Right ventricle myocardium inferior (tissue), 1 donor: ENCODE measurements at regions of chr10 and their contacts with region 1.

Region 1: DNA sequence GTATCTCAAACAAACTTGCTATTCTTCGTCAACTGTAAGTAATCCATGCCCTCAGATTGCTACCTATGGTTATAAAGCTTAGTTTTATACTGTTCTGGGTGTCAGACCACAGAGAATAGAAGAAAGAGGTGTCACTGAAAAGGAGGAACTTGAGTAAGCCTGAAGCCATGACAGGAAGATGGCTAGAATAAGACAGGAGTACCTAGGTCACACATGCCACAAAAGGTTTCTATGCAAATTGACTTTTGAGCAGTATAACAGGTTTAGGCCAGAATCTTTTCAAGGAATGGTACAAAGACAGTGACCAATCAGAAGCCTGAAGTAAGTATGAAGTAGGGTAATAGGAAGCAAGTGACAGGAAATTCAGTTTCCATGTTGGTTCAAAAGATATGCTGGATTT is 23.5 kb downstream of the FBXW4 start:
- DNase-seq: no peak
- ATAC-seq: no peak

Region 2: DNA sequence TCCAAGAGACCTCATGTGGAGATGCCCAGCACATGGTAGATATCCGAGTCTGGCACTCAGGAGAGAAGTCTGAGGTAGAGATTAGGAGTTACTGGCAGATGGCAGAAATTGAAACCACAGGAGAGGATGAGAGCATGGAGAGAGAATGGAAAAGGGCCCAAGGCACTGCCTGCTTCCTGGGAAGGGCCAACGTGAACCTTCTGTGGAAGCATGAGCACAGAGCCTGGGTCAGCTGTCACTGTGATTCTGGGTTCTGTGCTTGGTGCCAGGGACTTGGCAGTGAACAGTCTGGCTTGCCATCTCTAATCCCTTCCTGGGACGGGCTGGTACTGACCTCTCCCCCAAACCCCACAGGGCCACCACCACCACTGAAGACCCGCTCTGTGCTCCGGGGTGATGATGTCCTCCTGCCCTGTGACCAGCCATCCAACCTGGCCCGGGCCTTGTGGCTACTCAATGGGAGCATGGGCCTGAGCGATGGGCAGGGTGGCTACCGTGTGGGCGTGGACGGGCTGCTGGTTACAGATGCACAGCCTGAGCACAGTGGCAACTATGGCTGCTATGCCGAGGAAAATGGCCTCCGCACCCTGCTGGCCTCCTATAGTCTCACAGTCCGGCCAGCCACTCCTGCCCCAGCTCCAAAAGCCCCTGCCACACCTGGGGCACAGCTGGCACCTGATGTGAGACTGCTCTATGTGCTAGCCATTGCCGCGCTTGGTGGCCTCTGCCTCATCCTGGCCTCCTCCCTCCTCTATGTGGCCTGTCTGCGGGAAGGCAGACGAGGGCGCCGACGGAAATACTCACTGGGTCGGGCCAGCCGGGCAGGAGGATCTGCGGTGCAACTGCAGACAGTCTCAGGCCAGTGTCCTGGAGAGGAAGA is 688.3 kb before region 1 on chr10:
- intact Hi-C with region 1: no loop called
- DNase-seq: no peak
- ATAC-seq: no peak

Region 3: DNA sequence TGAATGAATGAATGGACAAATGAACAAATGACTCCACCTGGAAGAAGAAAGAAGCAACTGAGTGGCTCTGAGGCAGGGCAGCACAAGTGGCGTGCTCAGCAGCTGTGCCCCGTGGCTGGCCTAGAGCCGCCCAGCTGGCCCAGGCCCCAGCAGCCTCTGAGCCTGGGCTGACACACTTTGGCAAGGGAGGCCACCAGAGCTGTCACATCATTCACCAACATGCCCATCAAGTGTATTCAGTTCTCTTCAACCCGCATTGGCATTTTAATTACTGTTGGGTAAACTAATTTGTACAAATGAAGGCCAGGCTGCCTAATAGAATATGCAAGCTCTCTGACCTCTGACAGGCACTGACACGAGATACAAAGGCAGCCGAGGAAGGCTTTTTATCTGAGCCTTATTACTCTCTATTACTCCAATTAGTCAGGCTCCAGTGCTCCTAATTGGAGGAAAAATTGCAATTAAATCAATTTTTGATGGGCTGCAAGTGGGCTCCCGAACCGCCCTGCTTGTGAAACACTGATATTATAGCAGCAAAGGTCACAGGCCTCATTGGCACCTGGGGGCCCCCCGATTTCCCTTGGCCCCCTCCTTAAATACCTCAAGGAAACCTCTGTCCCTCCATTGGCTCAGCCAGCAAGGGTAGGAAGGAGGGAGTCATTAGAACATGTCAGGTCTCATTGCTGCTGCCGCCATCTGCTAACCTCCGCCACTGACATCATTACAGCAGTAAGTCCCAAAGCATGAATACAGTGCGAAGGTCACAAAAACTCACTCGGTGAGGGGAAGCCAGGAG is 41.4 kb before region 1 on chr10:
- intact Hi-C with region 1: loop called (anchors 5 kb)
- DNase-seq: no peak
- ATAC-seq: peak; percentile 90

Region 4: DNA sequence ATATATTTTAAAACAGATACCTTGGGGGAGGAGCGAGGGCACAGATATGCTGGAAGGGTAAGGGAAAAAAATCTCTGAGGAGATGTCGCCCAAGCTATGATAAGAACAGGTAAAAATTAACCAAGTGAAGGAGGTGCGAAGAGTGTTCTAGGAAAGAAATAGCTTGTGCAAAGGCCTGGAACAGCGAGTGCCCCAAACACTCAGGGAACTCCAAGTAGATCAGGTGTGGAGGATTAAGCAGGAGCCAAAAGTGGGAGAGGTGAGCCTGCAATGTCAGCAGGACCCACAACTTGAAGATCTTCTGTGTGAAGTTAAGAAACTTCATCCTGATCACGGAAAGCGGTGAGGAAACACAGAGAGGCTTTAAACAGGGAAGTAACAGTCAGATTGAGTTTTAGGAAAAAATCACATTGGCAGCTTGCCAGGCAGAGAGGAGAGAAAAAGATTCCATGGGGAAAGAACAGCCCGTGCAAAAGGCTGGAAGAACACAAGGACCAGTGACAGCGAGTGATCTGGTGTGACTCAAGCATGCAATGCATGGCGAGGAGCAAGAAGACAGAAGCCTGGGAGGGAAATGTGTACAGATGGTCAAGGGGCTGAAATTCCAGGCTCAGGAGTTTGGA is 73.7 kb after region 1 on chr10:
- intact Hi-C with region 1: no loop called
- DNase-seq: no peak
- ATAC-seq: no peak